CD4-positive, alpha-beta memory T cell (primary cell): ENCODE measurements at regions of chr10 and their contacts with region 1.

Region 1: GRCh38 chr10:6416892-6417512 is 163.1 kb downstream of the PRKCQ start:
- DNase-seq: peak in 4 of 5 donors; percentile 52 to 57 (median 56)
- H3K4me3 ChIP-seq: no peak overlapping the region
- H3K4me3 Mint-ChIP-seq: no peak overlapping the region
- H3K27ac ChIP-seq: no peak overlapping the region
- H3K27ac Mint-ChIP-seq: no peak overlapping the region
- H3K4me1 ChIP-seq: no peaks in the 10 kb centered on the region
- H3K4me1 Mint-ChIP-seq: peaks cover 0 to 6% (median 2%) of the 10 kb centered on the region in 4 donors
- H3K27me3 ChIP-seq: no peaks in the 10 kb centered on the region
- H3K27me3 Mint-ChIP-seq: no peaks in the 10 kb centered on the region

Region 2: GRCh38 chr10:6507311-6507710 is 90.3 kb after region 1 on chr10:
- CTCF ChIA-PET with region 1: no interaction called
- POLR2A ChIA-PET with region 1: no interaction called
- intact Hi-C with region 1: no loop called
- DNase-seq: no peak
- H3K4me3 ChIP-seq: no peak overlapping the region
- H3K4me3 Mint-ChIP-seq: peak overlapping the region in 5 of 8 donors; percentile 0 to 33 (median 24)
- H3K27ac ChIP-seq: peak overlapping the region; percentile 14
- H3K27ac Mint-ChIP-seq: peak overlapping the region; percentile 74 to 92 (median 85)
- H3K4me1 ChIP-seq: peaks cover 49% of the 10 kb centered on the region
- H3K4me1 Mint-ChIP-seq: peaks cover 41 to 66% (median 53%) of the 10 kb centered on the region in 4 donors
- H3K27me3 ChIP-seq: no peaks in the 10 kb centered on the region
- H3K27me3 Mint-ChIP-seq: no peaks in the 10 kb centered on the region

Region 3: DNA sequence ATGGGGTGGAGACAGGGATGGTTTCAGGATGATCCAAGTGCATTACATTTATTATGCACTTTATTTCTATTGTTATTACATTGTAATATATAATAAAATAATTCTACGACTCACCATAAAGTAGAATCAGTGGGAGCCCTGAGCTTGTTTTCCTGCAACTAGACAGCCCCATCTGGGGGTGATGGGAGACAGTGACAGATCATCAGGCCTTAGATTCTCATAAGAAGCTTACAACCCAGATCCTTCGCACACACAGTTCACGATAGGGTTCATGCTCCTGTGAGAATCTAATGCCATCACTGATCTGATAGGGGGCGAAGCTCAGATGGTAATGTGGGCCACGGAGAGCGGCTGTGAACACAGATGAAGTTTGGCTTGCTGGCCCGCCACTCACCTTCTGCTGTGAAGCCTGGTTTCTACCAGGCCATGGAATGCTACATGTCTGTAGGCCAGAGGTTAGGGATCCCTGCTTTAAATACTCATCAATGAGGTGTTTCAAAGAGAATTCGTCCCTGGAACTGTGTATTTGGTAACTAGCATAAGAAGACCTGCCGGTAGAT is 184.3 kb after region 1 on chr10:
- CTCF ChIA-PET with region 1: interaction called, 3 read pairs
- POLR2A ChIA-PET with region 1: no interaction called
- intact Hi-C with region 1: loop called (anchors 2 kb)
- DNase-seq: peak; percentile 47 to 55 (median 53)
- H3K4me3 ChIP-seq: no peak overlapping the region
- H3K4me3 Mint-ChIP-seq: peak overlapping the region in 7 of 8 donors; percentile 38 to 85 (median 77)
- H3K27ac ChIP-seq: no peak overlapping the region
- H3K27ac Mint-ChIP-seq: peak overlapping the region; percentile 63 to 92 (median 85)
- H3K4me1 ChIP-seq: peaks cover 67% of the 10 kb centered on the region
- H3K4me1 Mint-ChIP-seq: peaks cover 46 to 81% (median 63%) of the 10 kb centered on the region in 4 donors
- H3K27me3 ChIP-seq: no peaks in the 10 kb centered on the region
- H3K27me3 Mint-ChIP-seq: no peaks in the 10 kb centered on the region

Region 4: GRCh38 chr10:6667679-6668270 is 250.8 kb after region 1 on chr10:
- CTCF ChIA-PET with region 1: interaction called, 78 read pairs
- POLR2A ChIA-PET with region 1: no interaction called
- intact Hi-C with region 1: loop called (anchors 1 kb)
- DNase-seq: peak in 4 of 5 donors; percentile 15 to 34 (median 26)
- H3K4me3 ChIP-seq: no peak overlapping the region
- H3K4me3 Mint-ChIP-seq: peak overlapping the region in 1 of 8 donors; percentile 10
- H3K27ac ChIP-seq: no peak overlapping the region
- H3K27ac Mint-ChIP-seq: no peak overlapping the region
- H3K4me1 ChIP-seq: peaks cover 22% of the 10 kb centered on the region
- H3K4me1 Mint-ChIP-seq: peaks cover 15 to 28% (median 21%) of the 10 kb centered on the region in 4 donors
- H3K27me3 ChIP-seq: no peaks in the 10 kb centered on the region
- H3K27me3 Mint-ChIP-seq: no peaks in the 10 kb centered on the region

Region 5: DNA sequence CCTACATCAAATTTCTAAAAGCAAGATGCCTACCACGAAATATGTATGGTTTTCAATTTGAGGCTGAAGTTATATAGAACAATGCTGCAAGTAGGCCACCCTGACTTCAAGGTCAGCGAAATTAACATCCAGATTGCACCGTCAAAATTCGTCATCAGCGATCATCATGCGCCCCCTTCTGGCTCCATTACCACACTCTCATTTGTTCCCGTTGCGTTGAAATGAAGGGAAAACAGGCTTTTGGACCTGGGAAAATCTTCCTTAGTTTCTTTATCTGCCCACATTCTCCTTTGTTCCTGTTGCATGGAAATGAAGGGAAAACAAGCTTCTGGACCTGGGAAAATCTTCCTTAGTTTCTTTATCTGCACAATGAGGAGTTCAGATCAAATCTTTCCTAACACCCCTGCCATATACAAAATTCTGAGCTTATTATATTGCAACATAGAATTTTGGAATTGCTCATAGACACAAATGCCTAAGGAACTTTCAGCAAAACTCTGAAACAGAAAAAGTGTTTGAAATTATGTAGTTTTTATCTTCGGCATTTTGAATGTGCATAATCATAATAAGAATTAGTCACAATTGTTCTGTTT is 261.3 kb after region 1 on chr10:
- CTCF ChIA-PET with region 1: interaction called, 74 read pairs
- POLR2A ChIA-PET with region 1: interaction called, 3 read pairs
- intact Hi-C with region 1: loop called (anchors 1 kb)
- DNase-seq: peak; percentile 53 to 59 (median 55)
- H3K4me3 ChIP-seq: no peak overlapping the region
- H3K4me3 Mint-ChIP-seq: no peak overlapping the region
- H3K27ac ChIP-seq: no peak overlapping the region
- H3K27ac Mint-ChIP-seq: peak overlapping the region in 1 of 7 donors; percentile 52
- H3K4me1 ChIP-seq: no peaks in the 10 kb centered on the region
- H3K4me1 Mint-ChIP-seq: peaks cover 0 to 6% (median 5%) of the 10 kb centered on the region in 4 donors
- H3K27me3 ChIP-seq: peaks cover 3% of the 10 kb centered on the region
- H3K27me3 Mint-ChIP-seq: peaks cover 4 to 9% of the 10 kb centered on the region in 2 donors

Region 6: DNA sequence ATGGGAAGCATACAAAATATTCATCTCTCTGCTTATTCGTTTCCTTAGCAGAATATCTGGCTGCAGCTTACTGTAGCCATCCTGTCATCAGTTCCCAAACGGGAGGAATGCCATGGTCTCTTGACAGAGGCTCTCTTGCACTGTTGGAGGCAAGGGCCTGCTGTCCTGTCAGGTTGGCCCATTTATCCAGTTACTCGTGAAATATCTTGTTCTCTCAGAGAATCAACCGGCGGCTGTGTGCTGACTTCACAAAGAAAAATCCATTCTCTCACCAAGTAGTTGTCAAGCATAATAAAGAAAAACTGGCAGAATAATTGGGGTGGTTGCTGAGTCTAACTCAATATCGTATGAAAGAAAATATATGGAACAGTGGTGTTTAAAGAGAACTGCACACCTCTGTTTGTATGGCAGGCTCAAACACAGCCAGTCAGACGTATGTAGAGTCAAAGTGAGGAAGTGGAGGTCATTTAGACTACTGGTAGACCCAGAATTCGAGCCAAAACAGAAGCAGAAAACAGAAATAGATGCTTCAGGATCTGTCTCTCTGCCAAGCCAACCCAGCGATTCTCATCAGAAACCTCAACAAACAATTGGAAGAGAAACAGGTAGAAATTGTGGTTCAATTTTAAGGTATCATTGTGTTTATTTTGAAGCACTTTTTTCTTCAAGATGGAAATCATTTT is 512.3 kb after region 1 on chr10:
- CTCF ChIA-PET with region 1: no interaction called
- POLR2A ChIA-PET with region 1: no interaction called
- intact Hi-C with region 1: loop called (anchors 5 kb)
- DNase-seq: peak in 1 of 5 donors; percentile 5
- H3K4me3 ChIP-seq: no peak overlapping the region
- H3K4me3 Mint-ChIP-seq: no peak overlapping the region
- H3K27ac ChIP-seq: no peak overlapping the region
- H3K27ac Mint-ChIP-seq: peak overlapping the region in 2 of 7 donors; percentile 23 to 84
- H3K4me1 ChIP-seq: peaks cover 52% of the 10 kb centered on the region
- H3K4me1 Mint-ChIP-seq: peaks cover 33 to 45% (median 38%) of the 10 kb centered on the region in 4 donors
- H3K27me3 ChIP-seq: no peaks in the 10 kb centered on the region
- H3K27me3 Mint-ChIP-seq: no peaks in the 10 kb centered on the region